B cell (primary cell): ENCODE measurements at regions of chr3 and their contacts with region 1.

Region 1: GRCh38 chr3:107927361-107928083 is 163.3 kb downstream of the CD47 start:
- DNase-seq: peak; percentile 77
- ATAC-seq: peak; percentile 93
- H3K4me3 ChIP-seq: peak overlapping the region; percentile 48 to 67 (median 58)
- H3K4me3 Mint-ChIP-seq: peak overlapping the region; percentile 93
- H3K27ac ChIP-seq: no peak overlapping the region
- H3K27ac Mint-ChIP-seq: peak overlapping the region; percentile 54
- H3K4me1 ChIP-seq: peaks cover 12 to 18% of the 10 kb centered on the region in 2 donors
- H3K4me1 Mint-ChIP-seq: peaks cover 15% of the 10 kb centered on the region
- H3K27me3 ChIP-seq: peaks cover 0 to 30% (median 8%) of the 10 kb centered on the region in 4 experiments
- H3K27me3 Mint-ChIP-seq: peaks cover 9% of the 10 kb centered on the region
- CTCF ChIP-seq: peak; percentile 86

Region 2: GRCh38 chr3:106242781-106243180 is 1684.7 kb before region 1 on chr3:
- CTCF ChIA-PET with region 1: no interaction called
- POLR2A ChIA-PET with region 1: no interaction called
- intact Hi-C with region 1: no loop called
- DNase-seq: peak; percentile 14
- ATAC-seq: no peak
- H3K4me3 ChIP-seq: no peak overlapping the region
- H3K4me3 Mint-ChIP-seq: no peak overlapping the region
- H3K27ac ChIP-seq: no peak overlapping the region
- H3K27ac Mint-ChIP-seq: peak overlapping the region; percentile 7
- H3K4me1 ChIP-seq: peaks cover 0 to 4% of the 10 kb centered on the region in 2 donors
- H3K4me1 Mint-ChIP-seq: peaks cover 8% of the 10 kb centered on the region
- H3K27me3 ChIP-seq: no peaks in the 10 kb centered on the region
- H3K27me3 Mint-ChIP-seq: no peaks in the 10 kb centered on the region
- CTCF ChIP-seq: no peak

Region 3: GRCh38 chr3:107574650-107575049 is 352.9 kb before region 1 on chr3:
- CTCF ChIA-PET with region 1: interaction called, 8 read pairs
- POLR2A ChIA-PET with region 1: no interaction called
- intact Hi-C with region 1: loop called (anchors 5 kb)
- DNase-seq: peak; percentile 17
- ATAC-seq: no peak
- H3K4me3 ChIP-seq: no peak overlapping the region
- H3K4me3 Mint-ChIP-seq: no peak overlapping the region
- H3K27ac ChIP-seq: no peak overlapping the region
- H3K27ac Mint-ChIP-seq: no peak overlapping the region
- H3K4me1 ChIP-seq: no peaks in the 10 kb centered on the region
- H3K4me1 Mint-ChIP-seq: peaks cover 24% of the 10 kb centered on the region
- H3K27me3 ChIP-seq: no peaks in the 10 kb centered on the region
- H3K27me3 Mint-ChIP-seq: no peaks in the 10 kb centered on the region
- CTCF ChIP-seq: peak; percentile 63

Region 4: GRCh38 chr3:107660306-107660976 is 267.1 kb before region 1 on chr3:
- CTCF ChIA-PET with region 1: interaction called, 18 read pairs
- POLR2A ChIA-PET with region 1: no interaction called
- intact Hi-C with region 1: loop called (anchors 1 kb)
- DNase-seq: peak; percentile 51
- ATAC-seq: no peak
- H3K4me3 ChIP-seq: no peak overlapping the region
- H3K4me3 Mint-ChIP-seq: no peak overlapping the region
- H3K27ac ChIP-seq: no peak overlapping the region
- H3K27ac Mint-ChIP-seq: no peak overlapping the region
- H3K4me1 ChIP-seq: peaks cover 8% of the 10 kb centered on the region in 2 donors
- H3K4me1 Mint-ChIP-seq: peaks cover 25% of the 10 kb centered on the region
- H3K27me3 ChIP-seq: no peaks in the 10 kb centered on the region
- H3K27me3 Mint-ChIP-seq: no peaks in the 10 kb centered on the region
- CTCF ChIP-seq: peak; percentile 83

Region 5: DNA sequence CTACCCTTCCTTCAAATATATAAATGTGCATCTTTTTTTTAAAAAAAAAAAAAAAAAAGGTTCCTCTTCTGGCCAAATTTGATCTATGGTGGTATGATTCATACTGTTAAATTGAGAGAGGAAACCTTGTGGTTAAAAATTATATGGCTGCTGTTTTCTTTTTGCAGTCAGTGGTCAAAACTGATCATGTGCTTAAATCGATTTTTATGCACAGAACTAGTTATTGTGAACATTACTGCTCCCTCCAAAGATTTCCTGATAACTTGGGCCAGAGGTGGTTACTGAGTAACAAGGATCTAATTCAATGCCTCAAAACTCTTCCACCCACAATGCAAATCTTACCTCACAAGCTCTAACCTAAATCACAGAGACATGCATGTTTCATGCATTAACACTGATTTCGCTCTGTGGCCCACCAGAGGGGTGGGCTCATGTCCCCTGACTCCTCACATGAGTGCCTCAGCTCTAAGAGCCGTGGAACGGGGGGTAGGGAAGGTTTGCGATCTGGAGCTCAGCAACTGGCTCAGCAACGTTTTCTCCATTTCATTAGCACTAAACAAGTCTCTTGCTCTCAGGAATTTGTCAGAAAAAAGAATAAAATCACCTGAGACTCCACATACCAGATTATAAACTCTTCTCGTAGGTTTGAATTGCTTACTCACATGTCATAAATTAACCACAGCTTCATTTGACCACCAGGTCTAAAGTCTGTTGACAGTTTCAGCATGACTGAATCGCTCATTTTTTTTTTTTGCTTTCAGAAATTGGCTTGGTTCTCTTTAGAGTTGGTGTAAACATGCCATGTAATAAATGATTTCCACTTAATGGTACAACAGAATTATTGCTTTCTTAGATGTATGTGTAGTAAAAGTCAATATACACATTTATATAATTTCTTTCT is 117.1 kb before region 1 on chr3:
- CTCF ChIA-PET with region 1: interaction called, 3 read pairs
- POLR2A ChIA-PET with region 1: no interaction called
- intact Hi-C with region 1: loop called (anchors 10 kb)
- DNase-seq: no peak
- ATAC-seq: peak; percentile 49
- H3K4me3 ChIP-seq: no peak overlapping the region
- H3K4me3 Mint-ChIP-seq: peak overlapping the region; percentile 27
- H3K27ac ChIP-seq: peak overlapping the region in 1 of 2 donors; percentile 17
- H3K27ac Mint-ChIP-seq: peak overlapping the region; percentile 54
- H3K4me1 ChIP-seq: peaks cover 7 to 12% of the 10 kb centered on the region in 2 donors
- H3K4me1 Mint-ChIP-seq: peaks cover 16% of the 10 kb centered on the region
- H3K27me3 ChIP-seq: no peaks in the 10 kb centered on the region
- H3K27me3 Mint-ChIP-seq: no peaks in the 10 kb centered on the region
- CTCF ChIP-seq: no peak

Region 6: DNA sequence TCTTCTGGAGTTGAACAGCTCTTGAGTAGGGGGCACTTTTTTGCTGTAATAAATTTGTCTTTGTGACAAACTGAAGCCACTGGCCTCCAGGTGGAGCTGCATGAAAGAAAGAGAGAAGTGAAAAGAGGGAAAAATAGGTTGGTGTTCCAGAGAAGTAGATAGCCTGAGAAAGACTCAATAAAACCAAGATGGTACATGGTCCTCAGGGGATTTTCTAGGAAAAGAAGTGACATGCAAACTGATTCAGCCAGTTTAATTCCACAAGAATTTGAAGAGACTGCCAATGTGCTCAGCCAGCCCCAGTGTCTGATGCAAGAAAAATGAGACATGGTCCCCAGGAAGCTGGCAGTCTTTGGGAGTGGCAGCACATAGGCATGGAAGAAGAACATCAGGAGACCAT is 10.6 kb after region 1 on chr3:
- CTCF ChIA-PET with region 1: interaction called, 24 read pairs
- POLR2A ChIA-PET with region 1: no interaction called
- intact Hi-C with region 1: no loop called
- DNase-seq: peak; percentile 46
- ATAC-seq: no peak
- H3K4me3 ChIP-seq: no peak overlapping the region
- H3K4me3 Mint-ChIP-seq: no peak overlapping the region
- H3K27ac ChIP-seq: no peak overlapping the region
- H3K27ac Mint-ChIP-seq: no peak overlapping the region
- H3K4me1 ChIP-seq: no peaks in the 10 kb centered on the region
- H3K4me1 Mint-ChIP-seq: peaks cover 2% of the 10 kb centered on the region
- H3K27me3 ChIP-seq: no peaks in the 10 kb centered on the region
- H3K27me3 Mint-ChIP-seq: peaks cover 3% of the 10 kb centered on the region
- CTCF ChIP-seq: peak; percentile 13

Region 7: DNA sequence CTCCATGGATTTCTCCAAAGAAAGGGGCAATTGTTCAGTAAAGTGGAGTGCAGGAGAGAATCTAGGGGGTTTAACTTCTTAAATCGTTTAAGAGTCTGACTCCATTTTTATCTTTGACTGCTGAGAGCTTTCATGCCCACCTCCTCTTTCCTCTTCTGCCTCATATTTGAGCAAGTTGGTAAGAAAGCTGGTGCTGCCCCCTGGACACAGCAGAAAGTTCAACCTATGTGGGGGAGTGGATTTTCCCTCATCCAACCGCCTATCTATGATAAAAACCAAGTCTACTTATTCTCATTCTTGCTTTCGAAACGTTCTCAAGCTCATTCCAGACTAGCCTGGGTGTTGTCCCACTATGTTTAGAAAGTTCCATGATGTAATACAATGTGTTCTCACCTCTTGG is 394.8 kb after region 1 on chr3:
- CTCF ChIA-PET with region 1: interaction called, 20 read pairs
- POLR2A ChIA-PET with region 1: no interaction called
- intact Hi-C with region 1: loop called (anchors 1 kb)
- DNase-seq: peak; percentile 55
- ATAC-seq: peak; percentile 73
- H3K4me3 ChIP-seq: no peak overlapping the region
- H3K4me3 Mint-ChIP-seq: no peak overlapping the region
- H3K27ac ChIP-seq: no peak overlapping the region
- H3K27ac Mint-ChIP-seq: no peak overlapping the region
- H3K4me1 ChIP-seq: no peaks in the 10 kb centered on the region
- H3K4me1 Mint-ChIP-seq: peaks cover 12% of the 10 kb centered on the region
- H3K27me3 ChIP-seq: no peaks in the 10 kb centered on the region
- H3K27me3 Mint-ChIP-seq: no peaks in the 10 kb centered on the region
- CTCF ChIP-seq: peak; percentile 52